ENCODE measurements at regions of chr5 and their contacts with region 1.

Region 1: GRCh38 chr5:78537821-78538220 is 110.8 kb downstream of the LHFPL2 start:
- DNase-seq: peak; percentile 39 to 64 (median 60)
- H3K4me3 ChIP-seq: no peak overlapping the region
- H3K27ac ChIP-seq: no peak overlapping the region
- H3K4me1 ChIP-seq: peaks cover 0 to 21% (median 5%) of the 10 kb centered on the region in 4 experiments
- H3K27me3 ChIP-seq: no peaks in the 10 kb centered on the region

Region 2: GRCh38 chr5:78253201-78253600 is 284.6 kb before region 1 on chr5:
- CTCF ChIA-PET with region 1: no interaction called
- POLR2A ChIA-PET with region 1: no interaction called
- DNase-seq: no peak
- H3K4me3 ChIP-seq: no peak overlapping the region
- H3K27ac ChIP-seq: no peak overlapping the region
- H3K4me1 ChIP-seq: no peaks in the 10 kb centered on the region
- H3K27me3 ChIP-seq: no peaks in the 10 kb centered on the region

Region 3: DNA sequence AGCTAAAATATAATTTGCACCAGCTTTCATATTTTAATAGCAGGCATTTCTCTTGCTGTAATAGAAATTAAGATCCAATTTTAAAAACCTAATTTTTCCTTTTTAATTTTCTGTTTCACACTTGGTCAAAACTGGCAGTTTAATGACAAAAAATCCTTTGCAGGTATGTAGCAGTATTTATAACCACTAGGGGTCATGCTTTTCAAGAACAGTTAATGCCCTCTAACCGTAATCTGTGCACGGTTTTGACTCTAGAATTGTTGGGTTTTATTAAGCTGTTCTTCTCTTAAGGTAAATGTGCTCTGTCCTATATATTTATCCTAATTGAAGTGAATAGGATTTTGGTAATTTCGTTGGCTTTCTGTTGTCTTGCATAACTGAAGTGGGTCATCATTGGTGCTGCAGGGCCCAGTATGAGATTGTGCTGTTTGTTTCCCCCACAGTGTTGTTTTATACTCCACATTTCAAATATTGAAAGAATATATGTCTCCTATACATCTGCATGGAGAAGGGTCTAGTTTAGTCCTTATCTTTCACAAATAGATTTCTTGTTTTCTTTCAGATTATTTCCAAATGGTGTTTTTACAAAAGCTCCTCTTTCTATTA is 70.0 kb before region 1 on chr5:
- CTCF ChIA-PET with region 1: interaction called, 51 read pairs
- POLR2A ChIA-PET with region 1: interaction called, 3 read pairs
- DNase-seq: peak; percentile 42 to 70 (median 69)
- H3K4me3 ChIP-seq: no peak overlapping the region
- H3K27ac ChIP-seq: no peak overlapping the region
- H3K4me1 ChIP-seq: no peaks in the 10 kb centered on the region
- H3K27me3 ChIP-seq: no peaks in the 10 kb centered on the region

Region 4: GRCh38 chr5:78483809-78484521 is 53.9 kb before region 1 on chr5:
- CTCF ChIA-PET with region 1: interaction called, 12 read pairs
- POLR2A ChIA-PET with region 1: no interaction called
- DNase-seq: peak; percentile 91 to 97 (median 95)
- H3K4me3 ChIP-seq: peak overlapping the region in 3 of 7 experiments; percentile 39 to 56 (median 44)
- H3K27ac ChIP-seq: peak overlapping the region; percentile 46 to 73
- H3K4me1 ChIP-seq: peaks cover 56 to 71% (median 63%) of the 10 kb centered on the region in 4 experiments
- H3K27me3 ChIP-seq: no peaks in the 10 kb centered on the region

Region 5: GRCh38 chr5:78509884-78510769 is 27.7 kb before region 1 on chr5:
- CTCF ChIA-PET with region 1: interaction called, 10 read pairs
- POLR2A ChIA-PET with region 1: no interaction called
- DNase-seq: peak; percentile 51 to 73 (median 59)
- H3K4me3 ChIP-seq: peak overlapping the region; percentile 73 to 97 (median 93)
- H3K27ac ChIP-seq: peak overlapping the region; percentile 56 to 76
- H3K4me1 ChIP-seq: peaks cover 48 to 66% (median 59%) of the 10 kb centered on the region in 4 experiments
- H3K27me3 ChIP-seq: no peaks in the 10 kb centered on the region

Region 6: GRCh38 chr5:78526049-78526525 is 11.7 kb before region 1 on chr5:
- CTCF ChIA-PET with region 1: interaction called, 10 read pairs
- POLR2A ChIA-PET with region 1: no interaction called
- DNase-seq: no peak
- H3K4me3 ChIP-seq: no peak overlapping the region
- H3K27ac ChIP-seq: no peak overlapping the region
- H3K4me1 ChIP-seq: peaks cover 0 to 15% (median 4%) of the 10 kb centered on the region in 4 experiments
- H3K27me3 ChIP-seq: no peaks in the 10 kb centered on the region

Region 7: GRCh38 chr5:78964887-78965286 is 427.1 kb after region 1 on chr5:
- CTCF ChIA-PET with region 1: interaction called, 14 read pairs
- POLR2A ChIA-PET with region 1: no interaction called
- DNase-seq: peak; percentile 65 to 80 (median 74)
- H3K4me3 ChIP-seq: no peak overlapping the region
- H3K27ac ChIP-seq: no peak overlapping the region
- H3K4me1 ChIP-seq: no peaks in the 10 kb centered on the region
- H3K27me3 ChIP-seq: no peaks in the 10 kb centered on the region

Measured in common myeloid progenitor, CD34-positive (primary cell).